ENCODE measurements at regions of chr4 and their contacts with region 1.

Region 1: GRCh38 chr4:88533937-88534750 is 10.6 kb upstream of the PYURF start:
- DNase-seq: no peak
- ATAC-seq: no peak
- H3K4me3 ChIP-seq: no peak overlapping the region
- H3K27ac ChIP-seq: peak overlapping the region in 1 of 12 donors; percentile 18
- H3K4me1 ChIP-seq: peaks cover 0 to 9% (median 0%) of the 10 kb centered on the region in 12 donors
- H3K27me3 ChIP-seq: no peaks in the 10 kb centered on the region
- CTCF ChIP-seq: no peak
- POLR2A ChIP-seq: no peak

Region 2: DNA sequence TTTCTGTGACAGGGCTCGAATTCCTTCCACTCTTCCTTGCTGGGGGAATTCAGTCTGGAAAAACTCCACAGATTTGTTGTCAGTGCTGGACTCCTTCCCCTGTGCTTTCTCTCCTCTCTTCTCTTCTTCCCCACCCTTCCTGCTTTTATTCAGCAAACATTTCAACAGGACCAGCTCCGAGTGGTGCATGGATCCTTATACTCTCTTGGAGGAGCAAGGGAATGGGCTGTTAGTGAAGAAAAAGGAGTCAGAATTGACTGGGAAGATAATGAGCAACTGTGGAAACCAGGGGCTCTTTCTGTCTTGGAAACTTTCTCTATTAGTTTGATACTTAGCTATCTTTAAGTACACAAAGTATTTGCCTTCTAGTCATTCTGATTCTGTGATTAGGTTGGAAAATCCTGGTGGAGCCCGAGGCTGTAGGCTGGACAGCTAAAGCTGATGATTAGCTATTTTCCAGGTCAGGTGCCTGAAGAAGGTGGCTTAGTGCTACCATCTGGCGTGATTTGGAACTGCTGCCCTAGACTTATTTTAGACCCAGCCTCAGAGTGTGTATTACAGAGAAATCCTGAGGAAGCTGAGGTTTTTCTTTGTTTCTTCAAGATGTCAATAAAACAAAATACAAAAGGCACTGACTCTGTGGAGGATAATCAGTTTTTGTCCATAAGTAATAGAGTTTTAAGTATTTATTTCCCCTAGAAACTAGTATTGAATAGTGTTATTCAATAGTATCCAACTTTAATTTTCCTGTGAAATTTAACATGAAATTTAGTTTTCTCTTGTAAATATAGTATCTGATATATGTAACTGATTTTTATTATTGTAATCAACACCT is 125.1 kb after region 1 on chr4:
- intact Hi-C with region 1: loop called (anchors 1 to 5 kb)
- DNase-seq: peak in 3 of 5 donors; percentile 30 to 47 (median 34)
- ATAC-seq: peak; percentile 86 to 97 (median 96)
- H3K4me3 ChIP-seq: no peak overlapping the region
- H3K27ac ChIP-seq: peak overlapping the region in 4 of 12 donors; percentile 8 to 48 (median 30)
- H3K4me1 ChIP-seq: peaks cover 0 to 6% (median 0%) of the 10 kb centered on the region in 12 donors
- H3K27me3 ChIP-seq: no peaks in the 10 kb centered on the region
- CTCF ChIP-seq: peak; percentile 56 to 85 (median 77)
- POLR2A ChIP-seq: no peak

Region 3: GRCh38 chr4:89029591-89029990 is 495.4 kb after region 1 on chr4:
- intact Hi-C with region 1: loop called in 8 of 10 experiments (anchors 5 to 10 kb)
- DNase-seq: no peak
- ATAC-seq: no peak
- H3K4me3 ChIP-seq: no peak overlapping the region
- H3K27ac ChIP-seq: no peak overlapping the region
- H3K4me1 ChIP-seq: no peaks in the 10 kb centered on the region
- H3K27me3 ChIP-seq: no peaks in the 10 kb centered on the region
- CTCF ChIP-seq: no peak
- POLR2A ChIP-seq: no peak

Measured in heart left ventricle (tissue), 16 donors.